ENCODE measurements at regions of chr11 and their contacts with region 1.

Region 1: GRCh38 chr11:3880724-3881123 is 25.3 kb downstream of the STIM1 start:
- DNase-seq: peak; percentile 65
- ATAC-seq: peak; percentile 77
- H3K4me3 ChIP-seq: peak overlapping the region in 1 of 5 experiments; percentile 27
- H3K4me3 Mint-ChIP-seq: peak overlapping the region; percentile 87
- H3K27ac ChIP-seq: peak overlapping the region; percentile 68 to 93
- H3K27ac Mint-ChIP-seq: peak overlapping the region; percentile 92
- H3K4me1 ChIP-seq: peaks cover 79 to 87% of the 10 kb centered on the region in 2 donors
- H3K4me1 Mint-ChIP-seq: peaks cover 78% of the 10 kb centered on the region
- H3K27me3 ChIP-seq: no peaks in the 10 kb centered on the region
- H3K27me3 Mint-ChIP-seq: no peaks in the 10 kb centered on the region
- CTCF ChIP-seq: no peak

Region 2: DNA sequence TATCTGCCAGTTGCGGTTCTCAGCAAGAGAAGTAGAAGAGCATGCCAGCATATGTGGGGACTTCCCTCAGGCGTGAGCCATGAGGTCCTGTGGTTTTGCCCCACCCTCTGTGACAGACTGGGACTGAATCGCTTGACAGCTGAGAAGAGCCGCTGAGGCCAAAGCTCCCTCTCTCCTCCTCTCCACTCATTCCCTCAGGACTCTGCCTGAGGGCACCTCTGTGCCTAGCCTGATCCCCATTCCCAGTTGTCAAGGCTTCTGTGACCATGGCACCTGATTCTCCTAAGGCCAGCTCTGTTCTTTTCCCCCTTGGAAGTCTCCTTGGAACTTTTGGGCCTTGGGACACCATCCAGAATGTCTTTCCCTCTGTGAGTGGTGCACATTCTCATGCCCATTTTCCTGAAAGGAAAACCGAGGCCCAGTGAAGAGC is 266.0 kb before region 1 on chr11:
- CTCF ChIA-PET with region 1: no interaction called
- POLR2A ChIA-PET with region 1: no interaction called
- intact Hi-C with region 1: no loop called
- DNase-seq: peak; percentile 59
- ATAC-seq: peak; percentile 89
- H3K4me3 ChIP-seq: peak overlapping the region in 1 of 5 experiments; percentile 3
- H3K4me3 Mint-ChIP-seq: peak overlapping the region; percentile 65
- H3K27ac ChIP-seq: no peak overlapping the region
- H3K27ac Mint-ChIP-seq: no peak overlapping the region
- H3K4me1 ChIP-seq: peaks cover 13 to 14% of the 10 kb centered on the region in 2 donors
- H3K4me1 Mint-ChIP-seq: peaks cover 13% of the 10 kb centered on the region
- H3K27me3 ChIP-seq: no peaks in the 10 kb centered on the region
- H3K27me3 Mint-ChIP-seq: no peaks in the 10 kb centered on the region
- CTCF ChIP-seq: no peak

Region 3: DNA sequence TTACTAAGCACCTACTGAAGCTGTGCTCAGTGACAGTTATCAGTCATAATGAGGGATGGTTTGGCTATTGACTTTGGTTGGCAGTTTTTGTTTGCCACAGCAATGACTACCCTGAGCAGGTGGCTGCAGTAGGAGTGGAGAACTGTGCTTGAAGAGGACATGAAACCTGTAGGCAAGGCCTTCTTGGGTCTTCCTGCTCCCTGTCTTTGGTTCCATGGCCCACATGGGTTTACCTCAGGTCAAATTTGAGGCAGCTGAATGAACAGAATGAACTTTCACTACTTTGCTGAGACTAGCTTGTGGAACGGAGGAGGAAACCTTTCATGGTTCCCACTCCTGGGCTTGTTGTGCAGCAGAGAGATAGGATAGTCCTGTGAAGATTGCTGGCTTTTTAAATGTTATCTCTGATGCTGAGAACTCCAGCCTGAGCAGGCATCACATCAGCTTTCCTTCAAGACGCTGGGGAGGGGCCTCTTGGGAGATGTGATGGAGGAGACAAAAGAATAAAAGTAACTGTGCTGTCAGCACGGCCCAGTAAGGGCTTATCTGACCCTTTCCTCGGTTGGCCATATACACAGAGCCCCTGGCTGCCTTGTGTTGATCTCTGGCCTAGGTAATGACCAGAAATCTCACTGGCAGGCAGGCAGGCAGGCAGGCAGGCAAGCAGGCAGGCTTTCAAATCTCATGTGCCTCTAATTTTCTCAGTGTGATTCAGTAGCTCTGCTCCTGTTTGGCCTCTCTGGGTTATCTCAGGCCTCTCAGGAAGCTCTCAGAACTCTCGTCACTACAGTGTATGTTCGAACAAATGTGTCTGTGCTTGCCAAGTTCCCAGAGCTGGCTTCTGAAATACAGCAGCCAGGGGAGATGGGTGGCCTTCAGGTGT is 13.3 kb before region 1 on chr11:
- CTCF ChIA-PET with region 1: interaction called, 3 read pairs
- POLR2A ChIA-PET with region 1: interaction called, 3 read pairs
- intact Hi-C with region 1: loop called (anchors 2 kb)
- DNase-seq: peak; percentile 52
- ATAC-seq: peak; percentile 50
- H3K4me3 ChIP-seq: no peak overlapping the region
- H3K4me3 Mint-ChIP-seq: peak overlapping the region; percentile 74
- H3K27ac ChIP-seq: peak overlapping the region; percentile 14 to 55
- H3K27ac Mint-ChIP-seq: peak overlapping the region; percentile 87
- H3K4me1 ChIP-seq: peaks cover 65 to 68% of the 10 kb centered on the region in 2 donors
- H3K4me1 Mint-ChIP-seq: peaks cover 79% of the 10 kb centered on the region
- H3K27me3 ChIP-seq: no peaks in the 10 kb centered on the region
- H3K27me3 Mint-ChIP-seq: no peaks in the 10 kb centered on the region
- CTCF ChIP-seq: no peak

Measured in B cell (primary cell).